Activated CD4-positive, alpha-beta T cell treated with anti-CD3 and anti-CD28 coated beads, Interleukin-2, amount 10 ng/mL, durations not matched to agents 24 days and 14 days (primary cell): ENCODE measurements at regions of chr9 and their contacts with region 1.

Region 1: GRCh38 chr9:20683351-20684034 is 566 bp upstream of the FOCAD start:
- DNase-seq: peak; percentile 80
- H3K4me3 Mint-ChIP-seq: peak overlapping the region; percentile 90
- H3K27ac Mint-ChIP-seq: peak overlapping the region; percentile 92
- H3K4me1 Mint-ChIP-seq: peaks cover 20% of the 10 kb centered on the region
- H3K27me3 Mint-ChIP-seq: no peaks in the 10 kb centered on the region

Region 2: GRCh38 chr9:19271076-19271475 is 1412.4 kb before region 1 on chr9:
- intact Hi-C with region 1: loop called (anchors 5 kb)
- DNase-seq: no peak
- H3K4me3 Mint-ChIP-seq: no peak overlapping the region
- H3K27ac Mint-ChIP-seq: no peak overlapping the region
- H3K4me1 Mint-ChIP-seq: peaks cover 22% of the 10 kb centered on the region
- H3K27me3 Mint-ChIP-seq: no peaks in the 10 kb centered on the region

Region 3: GRCh38 chr9:20604562-20604961 is 78.9 kb before region 1 on chr9:
- intact Hi-C with region 1: loop called (anchors 5 kb)
- DNase-seq: peak; percentile 71
- H3K4me3 Mint-ChIP-seq: peak overlapping the region; percentile 72
- H3K27ac Mint-ChIP-seq: peak overlapping the region; percentile 79
- H3K4me1 Mint-ChIP-seq: peaks cover 60% of the 10 kb centered on the region
- H3K27me3 Mint-ChIP-seq: no peaks in the 10 kb centered on the region

Region 4: GRCh38 chr9:20658677-20659473 is 24.6 kb before region 1 on chr9:
- intact Hi-C with region 1: loop called (anchors 1 kb)
- DNase-seq: no peak
- H3K4me3 Mint-ChIP-seq: no peak overlapping the region
- H3K27ac Mint-ChIP-seq: peak overlapping the region; percentile 88
- H3K4me1 Mint-ChIP-seq: peaks cover 2% of the 10 kb centered on the region
- H3K27me3 Mint-ChIP-seq: peaks cover 5% of the 10 kb centered on the region